Activated CD4-positive, alpha-beta T cell treated with anti-CD3 and anti-CD28 coated beads, Interleukin-2, amount 10 ng/mL, durations not matched to agents 24 days and 14 days (primary cell): ENCODE measurements at regions of chr12 and their contacts with region 1.

Region 1: GRCh38 chr12:70242695-70243509 is at the start of gene CNOT2:
- DNase-seq: peak; percentile 96
- H3K4me3 Mint-ChIP-seq: peak within 1 kb of the TSS; percentile 94
- H3K27ac Mint-ChIP-seq: peak within 1 kb of the TSS; percentile 99
- H3K4me1 Mint-ChIP-seq: peaks cover 47% of the 10 kb centered on the region
- H3K27me3 Mint-ChIP-seq: no peaks in the 10 kb centered on the region
- total RNA-seq, gene CNOT2: 65.6 and 74.4 TPM in 2 replicates

Region 2: GRCh38 chr12:68745904-68746571 is 1496.9 kb before region 1 on chr12 and contains the start of gene SLC35E3:
- intact Hi-C with region 1: loop called (anchors 5 kb)
- DNase-seq: peak; percentile 98
- H3K4me3 Mint-ChIP-seq: peak within 1 kb of the TSS; percentile 93
- H3K27ac Mint-ChIP-seq: peak within 1 kb of the TSS; percentile 80
- H3K4me1 Mint-ChIP-seq: peaks cover 38% of the 10 kb centered on the region
- H3K27me3 Mint-ChIP-seq: no peaks in the 10 kb centered on the region
- total RNA-seq, gene SLC35E3: 3.8 and 4.2 TPM in 2 replicates

Region 3: DNA sequence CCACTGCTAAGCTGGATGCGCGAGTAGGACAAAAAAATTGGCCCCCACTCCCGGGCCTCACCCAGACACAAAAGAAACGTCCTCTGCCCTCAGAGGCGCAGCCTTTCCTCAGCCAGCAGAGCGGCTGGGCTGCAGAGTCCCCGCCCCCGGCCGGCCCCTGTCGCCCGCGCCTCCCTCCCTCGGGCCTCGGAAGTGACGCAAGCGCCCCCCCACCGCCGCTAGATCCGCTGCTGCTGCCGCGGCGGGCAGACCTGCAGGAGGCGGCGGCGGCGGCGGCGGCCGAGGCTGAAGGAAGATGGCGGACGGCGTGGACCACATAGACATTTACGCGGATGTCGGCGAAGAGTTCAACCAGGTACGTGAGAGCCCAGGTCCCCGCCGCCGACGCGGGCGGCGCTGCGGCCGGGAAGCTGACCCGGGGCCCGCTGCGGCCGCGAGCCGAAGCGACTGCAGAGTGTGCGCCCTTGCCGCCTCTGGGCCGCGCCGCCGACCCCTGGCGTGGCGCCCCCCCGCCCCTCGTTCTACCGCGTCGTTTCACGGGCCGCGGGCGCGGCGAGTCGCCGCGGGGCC is 1003.5 kb before region 1 on chr12 and contains the start of gene CPSF6:
- intact Hi-C with region 1: loop called (anchors 10 kb)
- DNase-seq: peak; percentile 99
- H3K4me3 Mint-ChIP-seq: peak within 1 kb of the TSS; percentile 97
- H3K27ac Mint-ChIP-seq: peak within 1 kb of the TSS; percentile 98
- H3K4me1 Mint-ChIP-seq: peaks cover 43% of the 10 kb centered on the region
- H3K27me3 Mint-ChIP-seq: no peaks in the 10 kb centered on the region
- total RNA-seq, gene CPSF6: 114 and 121 TPM in 2 replicates

Region 4: DNA sequence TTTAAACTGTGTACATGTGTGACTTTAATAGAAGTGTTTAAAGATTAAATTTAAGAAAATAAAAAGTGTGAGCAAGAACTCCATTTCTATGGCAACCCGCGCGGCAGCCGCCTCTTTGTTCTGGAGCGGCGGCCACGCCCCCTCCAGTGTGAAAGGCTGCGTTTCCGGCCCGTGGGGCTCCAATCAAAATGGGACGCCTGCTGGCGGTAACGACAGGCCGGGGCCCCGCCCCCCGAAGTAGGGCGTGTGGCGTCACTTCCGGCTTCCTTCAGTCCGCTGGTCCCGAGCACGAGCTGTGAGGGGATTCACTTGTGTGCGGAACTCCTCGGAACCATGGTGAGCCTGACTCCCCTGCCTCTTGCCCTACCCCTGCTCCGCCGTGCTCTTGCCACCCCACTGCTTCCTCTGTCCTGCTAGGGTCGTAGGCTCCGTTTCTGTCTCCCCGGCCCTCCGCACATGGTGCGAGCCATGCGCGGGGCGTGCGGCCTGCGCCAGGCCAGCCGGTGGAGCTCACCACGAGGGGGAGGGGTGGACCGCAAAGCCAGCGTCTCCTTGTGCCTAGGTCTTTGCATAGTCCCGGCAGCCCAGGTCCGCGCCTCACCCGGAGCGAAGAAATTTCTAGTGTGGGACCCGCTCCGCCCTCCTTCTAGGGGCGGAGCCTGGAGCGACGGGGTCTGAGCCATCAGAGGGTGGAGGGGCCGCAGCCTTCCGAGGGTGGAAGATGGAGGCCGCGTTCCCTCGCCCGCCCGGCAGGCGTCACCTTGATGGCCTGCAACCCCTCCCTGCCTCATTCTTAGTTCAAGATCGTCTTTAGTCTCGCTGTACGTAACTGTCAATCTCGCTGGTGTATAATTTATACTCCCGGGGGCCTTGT is 657.5 kb before region 1 on chr12 and contains the start of gene CCT2:
- intact Hi-C with region 1: loop called (anchors 2 kb)
- DNase-seq: peak; percentile 99
- H3K4me3 Mint-ChIP-seq: peak within 1 kb of the TSS; percentile 99
- H3K27ac Mint-ChIP-seq: peak within 1 kb of the TSS; percentile 99
- H3K4me1 Mint-ChIP-seq: peaks cover 14% of the 10 kb centered on the region
- H3K27me3 Mint-ChIP-seq: no peaks in the 10 kb centered on the region
- total RNA-seq, gene CCT2: 490 and 511 TPM in 2 replicates

Region 5: GRCh38 chr12:70314145-70314544 is 71.2 kb after region 1 on chr12:
- intact Hi-C with region 1: loop called (anchors 5 kb)
- DNase-seq: no peak
- H3K4me3 Mint-ChIP-seq: no peak overlapping the region
- H3K27ac Mint-ChIP-seq: no peak overlapping the region
- H3K4me1 Mint-ChIP-seq: peaks cover 14% of the 10 kb centered on the region
- H3K27me3 Mint-ChIP-seq: no peaks in the 10 kb centered on the region

Region 6: GRCh38 chr12:70609711-70610491 is 367.0 kb after region 1 on chr12:
- intact Hi-C with region 1: no loop called
- DNase-seq: no peak
- H3K4me3 Mint-ChIP-seq: peak overlapping the region; percentile 56
- H3K27ac Mint-ChIP-seq: no peak overlapping the region
- H3K4me1 Mint-ChIP-seq: no peaks in the 10 kb centered on the region
- H3K27me3 Mint-ChIP-seq: peaks cover 33% of the 10 kb centered on the region

Region 7: GRCh38 chr12:71335151-71335962 is 1092.5 kb after region 1 on chr12:
- intact Hi-C with region 1: no loop called
- DNase-seq: no peak
- H3K4me3 Mint-ChIP-seq: no peak overlapping the region
- H3K27ac Mint-ChIP-seq: no peak overlapping the region
- H3K4me1 Mint-ChIP-seq: no peaks in the 10 kb centered on the region
- H3K27me3 Mint-ChIP-seq: no peaks in the 10 kb centered on the region

Region 8: GRCh38 chr12:71685914-71686665 is 1443.2 kb after region 1 on chr12 and contains the start of gene TMEM19:
- intact Hi-C with region 1: loop called (anchors 10 kb)
- DNase-seq: peak; percentile 94
- H3K4me3 Mint-ChIP-seq: peak within 1 kb of the TSS; percentile 92
- H3K27ac Mint-ChIP-seq: peak within 1 kb of the TSS; percentile 95
- H3K4me1 Mint-ChIP-seq: peaks cover 12% of the 10 kb centered on the region
- H3K27me3 Mint-ChIP-seq: no peaks in the 10 kb centered on the region
- total RNA-seq, gene TMEM19: 10.2 and 13.5 TPM in 2 replicates